Lower leg skin (tissue), 4 donors: ENCODE measurements at regions of chr10 and their contacts with region 1.

Region 1: GRCh38 chr10:28628184-28628893 is 49.0 kb upstream of the BAMBI start:
- DNase-seq: peak; percentile 64 to 94
- H3K4me3 ChIP-seq: no peak overlapping the region
- CTCF ChIP-seq: peak in 1 of 3 donors; percentile 31
- POLR2A ChIP-seq: no peak

Region 2: DNA sequence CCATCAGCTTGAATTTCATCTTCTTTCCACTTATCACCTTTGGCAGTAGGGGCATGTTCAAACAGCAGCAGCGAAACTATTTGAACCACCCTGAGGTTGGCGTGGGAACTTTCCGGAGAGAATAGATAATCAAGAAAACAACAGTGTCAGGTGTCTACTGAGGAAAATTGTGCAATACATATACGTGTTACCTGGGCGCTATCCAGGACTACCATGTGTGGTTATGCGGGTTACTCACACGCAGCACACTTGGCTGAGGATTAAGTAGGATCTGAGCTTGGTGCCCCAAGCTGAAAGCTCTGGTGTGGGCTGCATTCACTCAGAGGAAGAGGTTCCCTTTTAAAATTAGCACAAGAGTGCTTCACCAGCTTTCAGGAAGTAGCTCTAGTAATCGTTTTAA is 1758.8 kb before region 1 on chr10:
- intact Hi-C with region 1: no loop called
- DNase-seq: peak in 1 of 2 donors; percentile 78
- H3K4me3 ChIP-seq: no peak overlapping the region
- CTCF ChIP-seq: no peak
- POLR2A ChIP-seq: no peak

Region 3: GRCh38 chr10:28432210-28432676 is 196.1 kb before region 1 on chr10:
- intact Hi-C with region 1: loop called (anchors 10 kb)
- DNase-seq: peak in 1 of 2 donors; percentile 25
- H3K4me3 ChIP-seq: no peak overlapping the region
- CTCF ChIP-seq: no peak
- POLR2A ChIP-seq: no peak